ENCODE measurements at regions of chr2 and their contacts with region 1.

Region 1: GRCh38 chr2:30106543-30106942 is 40.3 kb upstream of the YPEL5 start:
- DNase-seq: peak; percentile 64
- H3K4me3 ChIP-seq: no peak overlapping the region
- H3K27me3 ChIP-seq: no peaks in the 10 kb centered on the region
- CTCF ChIP-seq: no peak

Region 2: GRCh38 chr2:29902356-29902755 is 204.2 kb before region 1 on chr2:
- CTCF ChIA-PET with region 1: no interaction called
- POLR2A ChIA-PET with region 1: no interaction called
- DNase-seq: no peak
- H3K4me3 ChIP-seq: no peak overlapping the region
- H3K27me3 ChIP-seq: peaks cover 2% of the 10 kb centered on the region; the same call in 1 of the 2 replicates
- CTCF ChIP-seq: no peak

Region 3: DNA sequence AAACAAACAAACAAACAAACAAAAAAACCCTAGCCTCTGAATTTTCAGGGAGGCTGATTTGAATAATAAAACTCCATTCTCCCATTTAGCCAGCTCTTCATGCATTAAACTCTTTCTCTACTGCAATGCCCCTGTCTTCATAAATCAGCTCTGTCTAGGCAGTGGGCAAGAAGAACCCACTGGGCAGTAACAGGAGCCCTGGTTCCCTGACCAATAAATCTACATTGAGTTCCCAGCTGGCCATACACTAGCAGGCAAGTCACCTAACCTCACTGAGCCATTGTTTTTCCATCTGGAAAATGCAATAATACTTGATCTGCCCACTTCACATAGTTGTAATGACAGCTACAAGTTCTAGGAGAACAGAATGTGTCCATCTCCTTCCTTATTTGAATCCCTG is 17.4 kb before region 1 on chr2:
- CTCF ChIA-PET with region 1: interaction called, 194 read pairs
- POLR2A ChIA-PET with region 1: no interaction called
- DNase-seq: no peak
- H3K4me3 ChIP-seq: no peak overlapping the region
- H3K27me3 ChIP-seq: peaks cover 26% of the 10 kb centered on the region
- CTCF ChIP-seq: no peak